ENCODE measurements at regions of chr3 and their contacts with region 1.

Region 1: GRCh38 chr3:141498598-141499223 is 11.9 kb downstream of the RASA2 start:
- DNase-seq: peak; percentile 58
- ATAC-seq: peak; percentile 85
- H3K4me3 Mint-ChIP-seq: peak overlapping the region; percentile 71
- H3K27ac Mint-ChIP-seq: peak overlapping the region; percentile 90
- H3K4me1 Mint-ChIP-seq: peaks cover 62% of the 10 kb centered on the region
- H3K27me3 Mint-ChIP-seq: no peaks in the 10 kb centered on the region
- CTCF ChIP-seq: no peak

Region 2: GRCh38 chr3:141477224-141477623 is 21.5 kb before region 1 on chr3:
- CTCF ChIA-PET with region 1: no interaction called
- POLR2A ChIA-PET with region 1: no interaction called
- intact Hi-C with region 1: loop called (anchors 1 kb)
- DNase-seq: no peak
- ATAC-seq: no peak
- H3K4me3 Mint-ChIP-seq: no peak overlapping the region
- H3K27ac Mint-ChIP-seq: no peak overlapping the region
- H3K4me1 Mint-ChIP-seq: peaks cover 14% of the 10 kb centered on the region
- H3K27me3 Mint-ChIP-seq: no peaks in the 10 kb centered on the region
- CTCF ChIP-seq: no peak